ENCODE measurements at regions of chr20 and their contacts with region 1.

Region 1: GRCh38 chr20:9407805-9408421 is 106.5 kb upstream of the LAMP5 start:
- DNase-seq: no peak
- ATAC-seq: peak; percentile 85 to 89
- H3K4me3 ChIP-seq: no peak overlapping the region
- H3K27ac ChIP-seq: no peak overlapping the region
- H3K4me1 ChIP-seq: no peaks in the 10 kb centered on the region
- H3K27me3 ChIP-seq: no peaks in the 10 kb centered on the region
- CTCF ChIP-seq: peak; percentile 80

Region 2: DNA sequence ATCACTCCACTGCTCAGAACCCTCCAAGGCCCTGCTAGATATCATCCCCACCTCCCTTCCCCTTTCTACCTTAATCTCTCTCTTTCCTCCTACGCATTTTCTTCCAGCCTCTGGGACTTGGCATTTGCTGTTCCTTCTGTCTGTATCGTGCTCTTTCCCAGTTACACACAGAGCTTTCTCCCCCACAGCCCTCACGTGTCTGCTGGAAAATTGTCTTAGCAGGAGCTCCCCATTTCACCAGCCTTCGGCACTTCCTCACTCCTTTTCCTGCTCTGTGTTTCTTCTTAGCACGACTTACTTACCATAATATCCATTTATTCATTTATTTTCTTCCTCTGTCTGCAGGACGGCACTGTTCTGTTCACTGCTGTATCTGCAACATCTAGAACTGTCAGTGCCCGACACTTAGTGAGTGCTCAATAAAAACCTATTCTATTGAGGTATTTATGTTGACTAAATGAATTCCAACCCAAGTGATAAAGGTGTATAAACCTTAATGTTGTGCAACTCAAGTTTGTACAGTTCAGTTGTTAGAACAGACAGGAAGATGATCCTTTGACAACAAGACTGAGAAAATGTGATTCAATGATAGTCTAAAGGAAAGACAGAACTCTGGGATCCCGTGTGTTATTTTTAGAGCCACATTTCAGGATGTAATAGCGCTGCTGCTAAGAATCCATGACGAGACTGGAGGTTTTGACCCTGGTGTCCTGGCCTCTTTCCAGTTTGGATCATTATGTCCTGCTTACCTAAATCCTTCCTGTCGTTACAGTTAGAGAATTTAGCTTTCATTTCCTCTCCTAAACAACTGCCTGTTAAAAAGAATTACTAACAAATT is 63.6 kb before region 1 on chr20:
- intact Hi-C with region 1: no loop called
- DNase-seq: no peak
- ATAC-seq: no peak
- H3K4me3 ChIP-seq: no peak overlapping the region
- H3K27ac ChIP-seq: peak overlapping the region; percentile 63
- H3K4me1 ChIP-seq: peaks cover 30% of the 10 kb centered on the region
- H3K27me3 ChIP-seq: no peaks in the 10 kb centered on the region
- CTCF ChIP-seq: no peak

Region 3: GRCh38 chr20:9514461-9515213 is 106.7 kb after region 1 on chr20 and contains the start of gene LAMP5:
- intact Hi-C with region 1: no loop called
- DNase-seq: peak; percentile 47
- ATAC-seq: peak; percentile 51 to 53
- H3K4me3 ChIP-seq: peak within 1 kb of the TSS; percentile 29
- H3K27ac ChIP-seq: no peak within 1 kb of the TSS
- H3K4me1 ChIP-seq: peaks cover 30% of the 10 kb centered on the region
- H3K27me3 ChIP-seq: peaks cover 62% of the 10 kb centered on the region
- CTCF ChIP-seq: no peak
- total RNA-seq, gene LAMP5: 0.41 TPM

Region 4: DNA sequence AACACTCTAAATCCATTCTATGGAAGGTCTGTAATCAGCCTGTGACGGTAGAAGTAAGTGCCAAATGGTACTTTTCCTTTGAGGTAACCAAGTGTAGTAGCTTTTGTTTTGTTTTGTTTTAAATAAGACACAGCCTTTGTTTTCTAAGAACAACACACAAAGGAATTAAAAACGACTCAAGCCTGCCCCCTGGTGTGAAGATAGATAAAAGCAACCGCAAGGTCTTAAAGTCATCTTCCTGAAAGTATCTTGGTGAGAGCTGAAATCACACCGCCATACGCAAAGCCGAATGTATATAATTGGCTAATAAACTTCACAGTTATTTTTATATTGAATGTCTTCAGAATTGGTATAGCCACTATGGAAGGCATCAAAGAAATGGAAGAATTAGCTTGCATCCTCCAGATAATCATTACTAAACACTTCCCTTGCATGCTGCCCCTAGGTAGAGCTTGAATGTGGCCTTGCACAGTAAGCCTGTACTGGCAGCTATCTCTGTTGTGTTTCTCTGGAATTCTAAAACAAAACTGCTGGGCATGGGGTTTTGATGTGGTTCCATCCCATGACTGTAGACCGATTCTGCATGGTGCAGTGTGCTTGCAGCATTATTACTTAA is 202.1 kb after region 1 on chr20:
- intact Hi-C with region 1: loop called (anchors 5 kb)
- DNase-seq: no peak
- ATAC-seq: peak; percentile 40 to 66
- H3K4me3 ChIP-seq: no peak overlapping the region
- H3K27ac ChIP-seq: no peak overlapping the region
- H3K4me1 ChIP-seq: no peaks in the 10 kb centered on the region
- H3K27me3 ChIP-seq: no peaks in the 10 kb centered on the region
- CTCF ChIP-seq: peak; percentile 68

Measured in lower lobe of right lung (tissue), 2 donors.